Activated CD8-positive, alpha-beta T cell treated with anti-CD3 and anti-CD28 coated beads, Interleukin-2, amount 10 ng/mL, durations not matched to agents 7 days and 5 days (primary cell): ENCODE measurements at regions of chr1 and their contacts with region 1.

Region 1: DNA sequence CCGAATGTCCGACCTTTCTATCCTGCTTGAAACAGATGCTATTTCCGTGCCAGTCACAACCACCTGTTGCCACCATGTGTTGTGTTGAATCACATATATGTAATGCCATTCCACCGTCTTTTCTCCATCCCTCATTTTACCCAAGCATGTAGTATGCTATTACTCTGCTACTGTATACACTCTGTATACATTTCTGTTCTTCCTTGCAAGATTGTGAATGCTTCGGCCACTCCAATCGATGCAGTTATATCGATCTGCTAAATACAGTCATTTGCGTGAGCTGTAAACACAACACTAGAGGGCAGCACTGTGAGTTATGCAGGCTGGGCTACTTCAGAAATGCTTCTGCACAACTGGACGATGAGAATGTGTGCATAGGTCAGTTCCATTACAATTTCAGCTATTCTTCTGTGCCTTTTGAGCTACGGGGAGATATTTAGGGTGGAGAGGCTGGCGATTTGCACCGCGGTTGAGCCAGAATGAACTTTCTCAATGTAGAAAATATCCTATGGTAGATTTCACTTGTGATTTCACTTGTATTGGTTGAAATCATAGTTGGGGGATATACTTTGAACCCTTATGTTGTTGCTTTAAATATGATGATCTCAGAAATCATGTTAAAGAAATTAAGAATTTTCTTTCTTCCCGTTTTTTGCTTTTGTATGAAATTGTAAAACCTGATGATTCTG is 289.8 kb downstream of the NTNG1 start:
- DNase-seq: peak; percentile 54
- ATAC-seq: peak; percentile 55
- H3K4me3 Mint-ChIP-seq: no peak overlapping the region
- H3K27ac Mint-ChIP-seq: no peak overlapping the region
- H3K4me1 Mint-ChIP-seq: no peaks in the 10 kb centered on the region
- H3K27me3 Mint-ChIP-seq: peaks cover 17% of the 10 kb centered on the region

Region 2: DNA sequence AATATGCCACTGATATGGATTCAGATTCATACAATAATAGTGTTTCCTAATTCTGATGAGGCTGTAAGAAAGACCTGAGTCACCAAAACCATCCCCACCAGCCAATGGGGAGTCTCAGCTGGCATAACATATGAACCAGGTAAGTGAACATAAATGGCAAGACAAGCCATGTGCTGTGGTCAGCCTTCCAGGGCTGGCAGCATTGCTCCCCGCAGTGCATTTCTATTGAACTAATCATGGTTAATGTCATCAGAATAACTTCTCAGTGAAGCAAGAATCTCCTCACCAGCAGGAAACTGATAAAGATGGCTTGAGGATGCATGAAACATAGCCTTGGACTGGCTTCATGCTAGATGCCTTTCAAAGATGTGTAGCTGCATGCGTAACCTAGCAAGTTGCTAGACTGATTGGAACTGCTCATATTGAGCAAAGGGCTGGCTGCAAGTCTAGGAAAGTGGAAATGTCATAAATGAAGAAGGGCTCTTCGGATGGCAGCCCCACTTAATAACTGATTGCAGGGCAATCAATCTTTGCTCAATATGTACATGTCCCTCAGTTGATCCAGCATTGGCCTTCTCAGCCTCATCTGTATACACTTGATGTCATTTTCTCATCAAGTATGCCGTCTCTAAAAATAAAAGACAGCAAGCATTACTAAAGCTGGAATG is 201.8 kb before region 1 on chr1:
- CTCF ChIA-PET with region 1: no interaction called
- POLR2A ChIA-PET with region 1: no interaction called
- DNase-seq: no peak
- ATAC-seq: no peak
- H3K4me3 Mint-ChIP-seq: no peak overlapping the region
- H3K27ac Mint-ChIP-seq: no peak overlapping the region
- H3K4me1 Mint-ChIP-seq: no peaks in the 10 kb centered on the region
- H3K27me3 Mint-ChIP-seq: no peaks in the 10 kb centered on the region

Region 3: DNA sequence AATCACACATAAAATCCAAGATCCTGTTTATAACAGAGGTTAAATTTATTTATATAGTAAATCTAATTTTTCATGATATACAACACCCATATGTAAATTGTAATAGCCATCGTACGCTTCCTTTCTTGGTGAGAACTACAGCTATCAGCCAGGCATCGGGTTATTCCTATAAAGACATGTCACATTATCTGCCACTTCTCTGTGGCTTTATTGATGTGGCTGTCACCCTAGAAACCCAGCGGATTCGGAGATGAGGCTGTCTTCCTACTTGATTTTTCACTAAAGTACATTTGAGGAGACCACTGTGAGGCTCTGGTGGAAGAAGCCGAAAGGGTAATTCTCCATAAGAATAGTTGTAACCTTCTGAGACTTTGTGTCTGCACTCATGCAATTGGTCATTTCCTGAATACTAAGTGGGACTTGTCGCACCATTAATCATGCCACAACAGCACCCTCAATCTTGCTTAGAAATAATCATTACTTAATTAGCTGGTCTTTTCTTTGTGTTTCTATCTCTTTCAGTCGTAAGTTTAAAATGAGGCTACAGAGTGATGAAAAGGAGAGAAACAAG is 183.8 kb before region 1 on chr1:
- CTCF ChIA-PET with region 1: no interaction called
- POLR2A ChIA-PET with region 1: no interaction called
- DNase-seq: no peak
- ATAC-seq: no peak
- H3K4me3 Mint-ChIP-seq: no peak overlapping the region
- H3K27ac Mint-ChIP-seq: no peak overlapping the region
- H3K4me1 Mint-ChIP-seq: peaks cover 8% of the 10 kb centered on the region
- H3K27me3 Mint-ChIP-seq: peaks cover 9% of the 10 kb centered on the region

Region 4: GRCh38 chr1:107529502-107530149 is 98.9 kb after region 1 on chr1:
- CTCF ChIA-PET with region 1: interaction called, 13 read pairs
- POLR2A ChIA-PET with region 1: no interaction called
- DNase-seq: peak; percentile 38
- ATAC-seq: peak; percentile 57
- H3K4me3 Mint-ChIP-seq: no peak overlapping the region
- H3K27ac Mint-ChIP-seq: no peak overlapping the region
- H3K4me1 Mint-ChIP-seq: peaks cover 7% of the 10 kb centered on the region
- H3K27me3 Mint-ChIP-seq: no peaks in the 10 kb centered on the region

Region 5: GRCh38 chr1:107748531-107748930 is 317.8 kb after region 1 on chr1:
- CTCF ChIA-PET with region 1: interaction called, 20 read pairs
- POLR2A ChIA-PET with region 1: no interaction called
- DNase-seq: no peak
- ATAC-seq: no peak
- H3K4me3 Mint-ChIP-seq: no peak overlapping the region
- H3K27ac Mint-ChIP-seq: no peak overlapping the region
- H3K4me1 Mint-ChIP-seq: no peaks in the 10 kb centered on the region
- H3K27me3 Mint-ChIP-seq: no peaks in the 10 kb centered on the region